ENCODE measurements at regions of chr1 and their contacts with region 1.

Region 1: DNA sequence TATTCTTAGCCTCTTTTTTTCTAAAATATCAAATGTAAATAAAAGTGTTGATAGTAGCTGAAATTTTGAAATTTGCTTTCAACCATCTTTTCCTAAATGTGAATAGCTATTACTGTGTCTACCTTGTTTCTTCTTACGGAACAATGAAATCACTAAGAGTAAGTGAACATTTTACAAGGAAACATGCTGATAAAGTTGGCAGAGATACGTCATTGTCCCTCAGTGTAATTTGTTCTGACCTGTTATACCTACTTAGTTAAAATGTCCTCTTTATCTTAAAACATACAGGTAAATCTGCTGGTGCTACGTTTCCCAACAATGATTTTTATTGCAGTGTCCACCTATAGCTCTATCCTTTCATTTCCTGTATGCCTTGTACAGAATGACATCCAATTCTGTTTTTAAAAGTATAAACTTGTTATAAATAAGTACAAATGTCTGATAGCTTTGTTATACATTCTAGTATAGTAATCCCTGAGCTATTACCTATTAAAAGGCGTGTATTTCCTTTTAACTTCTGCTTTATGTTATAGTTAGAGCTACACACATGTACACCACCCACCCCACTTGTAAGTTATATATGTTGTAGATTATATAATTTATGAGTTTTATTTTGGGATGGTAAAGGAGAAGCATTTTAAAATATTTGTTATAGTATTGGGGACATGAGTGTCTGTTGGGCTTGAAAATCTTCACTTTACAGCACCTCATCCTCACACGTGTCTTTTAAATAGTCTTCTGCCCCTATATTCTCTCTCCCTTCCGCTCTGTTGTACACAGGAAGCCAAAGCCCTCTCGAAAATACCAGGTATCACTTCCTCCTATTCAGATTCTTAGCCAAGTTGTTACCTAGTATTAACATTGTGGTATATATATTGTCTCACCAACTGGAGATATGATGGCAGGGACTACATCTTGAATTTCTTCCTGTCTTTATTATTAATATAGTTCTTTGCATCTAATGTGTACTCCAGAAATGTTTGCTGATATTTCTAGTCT is 25.2 kb downstream of the LAMC1 start:
- DNase-seq: peak; percentile 89
- H3K4me3 ChIP-seq: peak overlapping the region; percentile 55
- H3K27ac ChIP-seq: peak overlapping the region; percentile 93
- H3K4me1 ChIP-seq: peaks cover 79% of the 10 kb centered on the region
- CTCF ChIP-seq: no peak

Region 2: DNA sequence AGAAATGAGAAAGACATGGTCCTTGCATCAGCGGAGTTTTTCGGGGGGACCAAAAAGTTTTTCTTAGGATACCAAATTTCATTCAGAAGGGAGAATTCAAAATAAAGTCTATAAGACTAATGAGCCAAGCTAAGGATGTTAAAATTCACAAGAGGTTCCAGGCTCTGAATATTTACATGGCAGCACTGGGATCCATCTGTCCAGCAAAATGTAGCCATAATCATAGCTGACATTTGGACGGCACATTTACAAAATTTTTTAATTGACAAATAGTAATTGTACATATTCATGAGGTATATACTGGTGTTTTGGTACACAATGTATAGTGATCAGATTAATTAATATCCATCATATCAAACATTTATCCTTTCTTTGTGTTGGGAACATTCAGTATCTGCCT is 1094.8 kb before region 1 on chr1:
- CTCF ChIA-PET with region 1: no interaction called
- POLR2A ChIA-PET with region 1: no interaction called
- intact Hi-C with region 1: no loop called
- DNase-seq: no peak
- H3K4me3 ChIP-seq: no peak overlapping the region
- H3K27ac ChIP-seq: no peak overlapping the region
- H3K4me1 ChIP-seq: no peaks in the 10 kb centered on the region
- CTCF ChIP-seq: no peak

Region 3: GRCh38 chr1:182789138-182790076 is 259.0 kb before region 1 on chr1 and contains the start of gene NPL:
- CTCF ChIA-PET with region 1: no interaction called
- POLR2A ChIA-PET with region 1: no interaction called
- intact Hi-C with region 1: no loop called
- DNase-seq: peak; percentile 86
- H3K4me3 ChIP-seq: peak within 1 kb of the TSS; percentile 67
- H3K27ac ChIP-seq: no peak within 1 kb of the TSS
- H3K4me1 ChIP-seq: peaks cover 17% of the 10 kb centered on the region
- CTCF ChIP-seq: no peak
- total RNA-seq, gene NPL: 2.2 and 4.1 TPM in 2 replicates

Region 4: GRCh38 chr1:183030053-183030452 is 18.3 kb before region 1 on chr1:
- CTCF ChIA-PET with region 1: interaction called, 5 read pairs
- POLR2A ChIA-PET with region 1: interaction called, 69 read pairs
- intact Hi-C with region 1: loop called (anchors 2 kb)
- DNase-seq: no peak
- H3K4me3 ChIP-seq: no peak overlapping the region
- H3K27ac ChIP-seq: no peak overlapping the region
- H3K4me1 ChIP-seq: peaks cover 79% of the 10 kb centered on the region
- CTCF ChIP-seq: no peak

Region 5: GRCh38 chr1:183058851-183059502 is 10.6 kb after region 1 on chr1:
- CTCF ChIA-PET with region 1: no interaction called
- POLR2A ChIA-PET with region 1: interaction called, 11 read pairs
- intact Hi-C with region 1: no loop called
- DNase-seq: no peak
- H3K4me3 ChIP-seq: no peak overlapping the region
- H3K27ac ChIP-seq: no peak overlapping the region
- H3K4me1 ChIP-seq: peaks cover 10% of the 10 kb centered on the region
- CTCF ChIP-seq: no peak

Region 6: GRCh38 chr1:183070923-183071618 is 22.7 kb after region 1 on chr1:
- CTCF ChIA-PET with region 1: interaction called, 9 read pairs
- POLR2A ChIA-PET with region 1: interaction called, 16 read pairs
- intact Hi-C with region 1: loop called (anchors 2 kb)
- DNase-seq: peak; percentile 75
- H3K4me3 ChIP-seq: peak overlapping the region; percentile 53
- H3K27ac ChIP-seq: peak overlapping the region; percentile 46
- H3K4me1 ChIP-seq: peaks cover 41% of the 10 kb centered on the region
- CTCF ChIP-seq: peak; percentile 38; the same call in 1 of the 2 replicates

Region 7: DNA sequence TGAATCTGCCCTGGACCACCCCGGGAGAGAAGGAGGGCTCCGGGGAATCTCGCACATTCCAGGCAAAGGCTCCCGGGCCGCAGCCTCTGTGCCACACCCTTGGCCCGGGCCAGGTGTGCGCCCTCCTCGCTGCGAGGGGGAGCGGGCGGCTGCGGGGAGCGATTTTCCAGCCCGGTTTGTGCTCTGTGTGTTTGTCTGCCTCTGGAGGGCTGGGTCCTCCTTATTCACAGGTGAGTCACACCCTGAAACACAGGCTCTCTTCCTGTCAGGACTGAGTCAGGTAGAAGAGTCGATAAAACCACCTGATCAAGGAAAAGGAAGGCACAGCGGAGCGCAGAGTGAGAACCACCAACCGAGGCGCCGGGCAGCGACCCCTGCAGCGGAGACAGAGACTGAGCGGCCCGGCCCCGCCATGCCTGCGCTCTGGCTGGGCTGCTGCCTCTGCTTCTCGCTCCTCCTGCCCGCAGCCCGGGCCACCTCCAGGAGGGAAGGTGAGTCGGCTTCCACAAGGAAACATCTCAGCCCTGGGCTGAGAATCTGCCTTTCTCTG is 137.6 kb after region 1 on chr1 and contains the start of gene LAMC2:
- CTCF ChIA-PET with region 1: no interaction called
- POLR2A ChIA-PET with region 1: no interaction called
- intact Hi-C with region 1: no loop called
- DNase-seq: no peak
- H3K4me3 ChIP-seq: no peak within 1 kb of the TSS
- H3K27ac ChIP-seq: no peak within 1 kb of the TSS
- H3K4me1 ChIP-seq: no peaks in the 10 kb centered on the region
- CTCF ChIP-seq: no peak
- total RNA-seq, gene LAMC2: not detected in 2 replicates

Measured in OCI-LY7 (cell line).